ENCODE measurements at regions of chr16 and their contacts with region 1.

Region 1: DNA sequence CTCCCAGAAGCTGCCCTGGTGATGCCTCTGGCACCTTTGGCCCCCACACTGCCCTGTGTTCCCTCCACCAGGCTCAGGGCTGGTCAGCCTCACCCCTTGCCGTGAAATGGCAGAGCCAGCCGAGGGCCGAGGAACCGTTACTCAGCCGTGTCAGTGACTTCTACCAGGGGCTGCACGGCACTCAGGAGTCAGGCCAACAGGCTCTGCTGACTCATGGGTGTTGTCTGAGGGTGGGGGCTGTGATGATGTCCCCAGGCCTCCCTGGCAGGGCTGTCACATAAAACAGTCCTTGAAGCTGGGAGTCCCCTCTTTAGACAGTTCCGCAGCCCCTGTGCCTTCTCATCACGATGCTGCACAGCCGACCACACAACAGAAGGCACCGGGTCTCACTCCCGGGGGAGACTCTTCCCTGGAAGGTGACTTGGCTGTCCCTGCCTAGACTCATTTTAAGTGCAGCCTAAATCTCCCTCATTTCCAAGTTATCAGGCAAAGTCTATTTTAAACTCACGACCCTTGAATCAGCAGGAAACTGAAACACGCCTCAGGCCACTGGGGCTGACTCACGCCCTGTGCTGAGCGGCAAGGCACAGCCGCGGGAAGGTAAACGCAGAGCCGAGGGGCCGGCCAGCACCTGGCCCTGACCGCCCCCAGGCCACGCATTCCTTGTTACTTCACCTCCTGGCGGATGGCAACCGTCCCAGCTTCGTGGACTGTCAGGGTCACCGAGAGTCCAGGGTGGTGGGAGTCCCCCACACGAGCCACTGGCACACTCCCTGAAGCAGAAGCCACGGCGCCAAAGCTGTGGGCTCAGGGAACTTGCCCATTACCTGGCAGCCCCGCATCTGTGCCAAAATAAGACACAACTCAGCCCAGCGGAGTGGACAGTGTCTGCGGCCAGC is 102.6 kb downstream of the ZNF778 start:
- DNase-seq: peak; percentile 76
- ATAC-seq: peak; percentile 61

Region 2: DNA sequence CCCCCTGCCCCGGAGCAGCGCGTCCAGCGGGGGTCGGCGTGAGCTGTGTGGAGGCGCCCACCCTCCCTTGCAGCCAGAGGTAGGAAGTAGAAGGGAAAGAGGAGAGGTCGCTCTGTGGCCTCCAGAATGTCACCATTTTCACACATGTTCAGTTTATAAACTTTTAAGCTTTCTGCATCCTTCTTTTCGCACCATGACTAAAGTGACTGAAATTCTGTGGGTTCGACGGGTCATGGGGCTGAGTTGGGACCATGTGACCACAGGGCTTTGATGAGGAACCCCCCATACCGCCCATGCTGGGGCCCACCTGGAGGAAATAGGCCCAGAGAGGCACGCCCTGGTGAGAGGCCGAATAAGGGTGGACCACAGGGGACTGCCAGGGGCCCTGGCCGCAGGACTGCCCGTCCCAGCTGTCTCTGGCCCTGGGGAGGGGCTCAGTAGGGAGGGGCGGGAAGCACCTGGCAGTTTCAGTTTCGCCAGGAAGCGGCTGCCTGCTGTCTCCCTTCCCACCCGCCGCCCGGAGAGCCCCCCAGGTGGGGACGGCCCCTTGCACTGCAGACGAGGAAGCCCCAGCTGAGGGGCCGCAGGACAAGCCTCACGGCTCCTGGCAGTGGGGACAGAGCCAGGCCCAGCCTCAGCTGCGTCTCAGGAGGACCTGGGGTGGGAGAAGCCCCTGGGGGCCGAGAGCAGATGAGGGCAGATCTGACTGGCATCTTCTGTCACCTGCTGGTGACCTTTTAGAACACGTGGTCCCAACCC is 352.1 kb before region 1 on chr16:
- intact Hi-C with region 1: no loop called
- DNase-seq: peak; percentile 39
- ATAC-seq: no peak

Region 3: GRCh38 chr16:89300311-89300975 is 19.7 kb before region 1 on chr16:
- intact Hi-C with region 1: loop called (anchors 1 kb)
- DNase-seq: peak; percentile 72
- ATAC-seq: peak; percentile 83

Region 4: DNA sequence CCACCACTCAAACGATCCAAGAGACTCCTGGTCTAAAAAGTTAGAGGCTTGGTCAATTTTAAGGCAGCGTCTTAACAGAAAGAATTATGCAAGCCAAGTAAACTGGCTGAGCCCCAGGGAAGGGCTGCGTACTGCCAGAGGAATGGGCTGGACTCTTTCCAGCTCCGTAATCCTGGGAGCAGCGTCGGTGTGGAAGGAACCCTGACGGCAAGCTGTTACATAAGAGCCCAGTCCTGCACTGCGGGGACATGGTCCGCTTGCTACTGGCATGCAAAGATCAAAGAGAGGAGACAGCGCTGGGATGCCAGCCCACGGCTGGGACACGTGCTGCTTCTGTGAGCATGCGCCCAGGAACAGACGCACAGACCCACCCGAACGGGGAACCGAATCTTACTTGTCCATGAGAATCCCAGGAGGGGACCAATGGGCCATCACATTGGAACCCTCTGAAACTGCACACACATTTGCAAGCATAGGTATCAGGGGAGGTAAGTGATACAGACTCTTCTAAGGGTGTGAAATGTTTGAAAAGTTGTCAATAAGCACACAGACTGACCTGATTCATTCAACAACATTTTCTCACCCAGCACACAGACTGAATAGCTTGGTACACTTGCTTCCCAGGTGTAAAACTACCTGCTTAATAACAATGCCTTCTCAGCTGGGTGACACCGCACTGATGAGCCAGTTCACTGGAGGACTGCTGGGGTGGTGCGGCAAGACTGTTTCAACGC is 75.2 kb after region 1 on chr16:
- intact Hi-C with region 1: no loop called
- DNase-seq: peak; percentile 89
- ATAC-seq: peak; percentile 94

Region 5: DNA sequence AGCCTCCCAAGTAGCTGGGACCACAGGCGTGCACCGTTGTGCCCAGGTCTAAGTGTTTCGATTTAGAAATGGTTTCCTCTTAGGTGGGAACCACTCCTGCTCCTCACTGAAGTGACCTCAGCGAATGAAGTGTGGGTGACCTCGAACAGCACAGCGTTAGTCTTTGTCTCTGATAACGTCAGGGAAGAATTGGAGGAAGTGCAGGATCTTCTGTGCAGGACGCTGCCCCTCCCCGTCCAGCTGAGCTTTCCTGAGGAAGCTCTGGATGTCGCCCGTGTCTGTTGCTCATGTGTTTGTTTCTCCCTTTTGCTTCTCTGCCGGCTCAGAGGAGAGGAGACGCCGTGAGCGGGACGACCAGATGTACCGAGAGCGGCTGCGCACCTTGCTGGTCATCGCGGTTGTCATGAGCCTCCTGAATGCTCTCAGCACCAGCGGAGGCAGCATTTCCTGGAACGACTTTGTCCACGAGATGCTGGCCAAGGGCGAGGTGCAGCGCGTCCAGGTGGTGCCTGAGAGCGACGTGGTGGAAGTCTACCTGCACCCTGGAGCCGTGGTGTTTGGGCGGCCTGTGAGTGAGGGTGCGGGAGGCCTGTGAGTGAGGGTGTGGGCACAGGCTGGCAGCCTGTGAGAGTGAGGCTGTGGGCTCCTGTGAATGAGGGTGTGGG is 203.7 kb after region 1 on chr16:
- intact Hi-C with region 1: no loop called
- DNase-seq: peak; percentile 51
- ATAC-seq: peak; percentile 13

Region 6: DNA sequence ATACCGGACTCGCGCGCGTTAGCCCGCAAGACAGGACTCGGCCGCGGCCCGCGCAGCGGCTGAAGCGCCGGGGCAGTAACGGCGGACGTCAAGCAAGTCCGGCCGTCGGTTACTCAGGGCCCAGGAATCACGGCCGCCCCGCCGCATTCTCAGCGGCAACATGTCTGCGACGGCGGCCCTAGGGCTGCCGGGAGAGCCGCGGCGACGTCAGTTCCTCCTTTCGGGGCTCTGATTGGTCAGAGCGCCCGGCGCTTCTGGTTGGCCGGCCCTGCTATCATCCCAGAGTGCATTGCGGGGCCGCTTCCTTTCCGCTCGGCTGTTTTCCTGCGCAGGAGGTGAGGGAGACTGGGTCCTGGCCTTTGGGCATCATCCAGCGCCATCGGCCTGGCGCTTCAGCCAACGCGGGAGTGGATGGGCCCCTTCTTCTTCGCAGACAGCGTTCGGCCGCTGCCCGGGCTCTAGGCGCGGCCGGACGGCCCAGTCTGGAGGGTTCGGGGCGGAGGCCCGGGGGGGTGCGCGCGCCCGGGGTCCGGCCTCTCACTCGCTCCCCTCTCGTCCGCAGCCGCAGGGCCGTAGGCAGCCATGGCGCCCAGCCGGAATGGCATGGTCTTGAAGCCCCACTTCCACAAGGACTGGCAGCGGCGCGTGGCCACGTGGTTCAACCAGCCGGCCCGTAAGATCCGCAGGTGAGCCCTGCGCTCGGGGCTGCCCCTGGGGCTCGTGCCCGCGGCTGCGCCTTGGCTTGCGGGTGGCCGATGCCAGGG is 240.4 kb after region 1 on chr16 and contains the start of gene RPL13:
- intact Hi-C with region 1: no loop called
- DNase-seq: peak; percentile 99
- ATAC-seq: peak; percentile 97
- total RNA-seq, gene RPL13: 1,162 TPM

Region 7: GRCh38 chr16:89657442-89658220 is 337.5 kb after region 1 on chr16 and contains the starts of genes CHMP1A and SPATA33:
- intact Hi-C with region 1: loop called (anchors 10 kb)
- DNase-seq: peak; percentile 95
- ATAC-seq: peak; percentile 98
- total RNA-seq, gene CHMP1A: 40.6 TPM
- total RNA-seq, gene SPATA33: 1.6 TPM